Panc1 (cell line): ENCODE measurements at regions of chr14 and their contacts with region 1.

Region 1: DNA sequence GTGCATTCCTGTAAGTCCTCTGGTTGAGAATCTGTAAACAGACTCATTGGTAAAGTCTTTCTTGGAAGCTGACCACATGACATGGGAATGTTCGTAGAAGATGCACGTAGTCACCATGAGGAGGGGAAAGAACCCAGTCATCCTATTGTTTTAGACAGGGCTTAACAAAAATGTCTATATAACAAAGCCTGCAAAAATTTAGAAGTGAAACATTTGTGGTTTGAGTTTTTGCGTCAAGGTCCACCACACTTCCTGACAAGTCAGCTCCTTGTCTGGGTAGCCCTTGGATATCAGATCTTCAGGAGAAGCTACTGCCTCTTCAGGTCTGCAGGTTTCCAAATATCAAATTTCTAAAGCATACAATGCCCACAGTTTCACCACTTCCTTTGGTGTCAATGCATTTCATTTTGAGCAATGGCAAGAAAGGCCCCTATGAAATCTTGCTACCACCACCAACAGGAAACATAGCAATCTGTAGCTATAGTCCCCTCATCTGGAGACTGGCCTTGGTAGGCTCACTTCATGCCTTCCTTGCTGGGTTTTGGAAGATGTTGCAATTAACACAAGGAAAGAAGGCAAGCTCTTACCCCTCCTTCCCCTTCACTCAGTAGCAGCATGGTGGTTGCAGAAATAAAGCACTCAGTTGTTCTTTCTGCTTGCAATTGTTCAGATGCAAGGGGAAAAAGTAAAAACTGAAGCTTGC is 235.2 kb downstream of the PCNX1 start:
- DNase-seq: no peak
- ATAC-seq: no peak
- H3K4me3 ChIP-seq: no peak overlapping the region
- H3K27ac ChIP-seq: no peak overlapping the region
- H3K4me1 ChIP-seq: no peaks in the 10 kb centered on the region
- H3K27me3 ChIP-seq: no peaks in the 10 kb centered on the region
- CTCF ChIP-seq: no peak

Region 2: DNA sequence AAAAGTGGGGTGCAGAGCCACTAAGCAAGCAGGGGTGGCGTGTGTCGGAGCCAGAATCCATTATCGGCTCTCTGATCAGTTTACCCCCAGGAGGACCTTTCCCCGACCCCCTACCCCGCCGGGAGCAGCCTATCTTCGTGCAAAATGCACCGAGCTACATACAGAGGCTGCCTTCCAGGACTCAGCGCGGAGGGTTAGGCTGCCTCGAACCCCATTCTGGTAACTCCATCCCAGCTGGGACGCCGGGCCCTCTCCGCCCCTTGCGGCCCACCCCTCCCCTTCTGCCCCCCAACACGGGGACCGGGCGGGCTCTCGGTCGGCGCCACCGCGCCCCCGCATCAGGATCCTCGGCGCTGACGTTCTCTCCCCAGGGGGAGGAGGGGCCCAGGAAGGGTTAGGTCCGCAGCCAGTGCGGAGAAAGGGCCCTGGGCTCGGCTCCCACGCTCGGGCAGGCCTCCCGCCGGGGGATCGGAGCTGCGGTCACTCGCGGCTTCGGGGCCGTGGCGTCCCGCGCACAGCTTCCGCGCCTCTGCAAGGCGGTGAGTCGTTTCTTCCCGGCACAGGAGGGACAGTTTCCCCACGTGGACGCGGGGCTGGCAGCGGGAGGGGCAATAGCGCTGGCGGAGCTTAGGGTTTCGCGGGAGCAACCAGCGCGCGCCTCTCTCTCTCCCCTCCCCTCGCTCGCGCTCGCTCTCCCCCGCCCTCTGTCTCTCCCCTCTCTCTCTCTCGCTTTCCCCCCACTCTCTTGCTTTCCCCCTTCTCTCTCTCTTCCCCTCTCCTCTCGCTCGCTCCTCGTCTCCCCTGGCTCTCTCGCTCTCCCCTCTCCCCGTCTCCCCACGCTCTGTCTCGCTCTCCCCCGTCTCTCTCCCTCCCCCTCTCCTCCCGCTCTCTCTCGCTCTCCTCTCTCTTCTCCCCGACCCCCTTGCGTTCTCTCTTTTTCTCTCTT is 320.6 kb before region 1 on chr14:
- CTCF ChIA-PET with region 1: no interaction called
- POLR2A ChIA-PET with region 1: no interaction called
- in situ Hi-C with region 1: no loop called
- intact Hi-C with region 1: no loop called
- DNase-seq: no peak
- ATAC-seq: peak; percentile 70
- H3K4me3 ChIP-seq: peak overlapping the region; percentile 53 to 59
- H3K27ac ChIP-seq: no peak overlapping the region
- H3K4me1 ChIP-seq: peaks cover 7% of the 10 kb centered on the region
- H3K27me3 ChIP-seq: peaks cover 4% of the 10 kb centered on the region; the same call in 1 of the 2 replicates
- CTCF ChIP-seq: no peak

Region 3: GRCh38 chr14:71753126-71753830 is 610.8 kb after region 1 on chr14:
- CTCF ChIA-PET with region 1: interaction called, 3 read pairs
- POLR2A ChIA-PET with region 1: no interaction called
- in situ Hi-C with region 1: no loop called
- intact Hi-C with region 1: loop called (anchors 2 kb)
- DNase-seq: peak; percentile 43
- ATAC-seq: peak; percentile 84; the same call in 1 of the 2 replicates
- H3K4me3 ChIP-seq: no peak overlapping the region
- H3K27ac ChIP-seq: no peak overlapping the region
- H3K4me1 ChIP-seq: no peaks in the 10 kb centered on the region
- H3K27me3 ChIP-seq: no peaks in the 10 kb centered on the region
- CTCF ChIP-seq: peak; percentile 88